GM13976 (cell line): ENCODE measurements at regions of chr1 and their contacts with region 1.

Region 1: DNA sequence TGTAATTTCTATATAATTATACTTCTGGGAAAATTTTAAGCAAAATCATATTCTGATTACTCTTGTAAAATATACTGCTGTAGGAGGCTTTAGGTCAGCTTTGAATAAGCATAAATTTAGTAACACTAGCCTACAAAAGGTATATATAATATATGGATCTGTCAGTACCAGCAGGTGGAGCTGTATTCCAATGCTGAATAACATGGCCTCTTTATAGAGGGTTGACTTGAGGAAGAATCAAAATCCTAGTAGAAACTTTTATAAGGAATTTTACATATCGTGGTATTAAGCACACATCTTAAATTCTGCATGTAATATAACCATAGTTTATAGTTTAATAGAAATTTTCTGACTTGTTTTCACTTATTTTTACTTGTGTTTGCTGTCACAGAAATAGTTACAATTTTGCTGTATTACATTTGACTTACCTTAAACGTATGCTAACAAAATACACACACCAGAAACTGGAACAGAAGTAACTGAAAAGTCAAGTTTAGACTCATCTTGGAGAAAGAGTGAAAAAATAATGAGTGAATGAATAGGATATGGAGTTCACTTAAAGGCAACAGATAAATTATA is 79.3 kb downstream of the HMCN1 start:
- DNase-seq: no peak
- CTCF ChIP-seq: peak; percentile 20

Region 2: DNA sequence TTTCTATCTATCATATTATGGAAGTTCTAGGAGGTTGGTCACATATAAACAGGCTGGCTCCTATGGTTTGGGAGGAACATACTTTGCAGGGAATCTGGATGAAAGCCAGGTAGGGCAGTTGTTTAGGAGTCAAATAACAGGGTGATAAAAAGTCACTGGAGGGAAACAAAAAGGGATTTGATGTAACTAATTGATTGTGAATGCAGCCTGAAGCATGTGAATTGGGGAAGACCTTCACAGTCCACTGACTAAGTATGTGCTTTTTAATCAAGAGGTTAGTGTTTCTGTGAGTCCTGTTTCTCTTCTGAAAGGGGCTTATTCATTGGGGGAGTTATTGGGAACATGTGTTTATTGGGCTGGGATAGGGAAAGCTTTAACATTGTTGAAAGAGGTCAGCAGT is 38.0 kb before region 1 on chr1:
- in situ Hi-C with region 1: no loop called
- DNase-seq: no peak
- CTCF ChIP-seq: no peak

Region 3: GRCh38 chr1:185926562-185926961 is 113.1 kb after region 1 on chr1:
- in situ Hi-C with region 1: no loop called
- DNase-seq: no peak
- CTCF ChIP-seq: no peak

Region 4: GRCh38 chr1:186014370-186015030 is 201.0 kb after region 1 on chr1:
- in situ Hi-C with region 1: no loop called
- DNase-seq: no peak
- CTCF ChIP-seq: no peak

Region 5: GRCh38 chr1:186212544-186213226 is 399.2 kb after region 1 on chr1:
- in situ Hi-C with region 1: loop called (anchors 25 kb)
- DNase-seq: peak; percentile 47
- CTCF ChIP-seq: peak; percentile 75